Calu3 (cell line): ENCODE measurements at regions of chr2 and their contacts with region 1.

Region 1: DNA sequence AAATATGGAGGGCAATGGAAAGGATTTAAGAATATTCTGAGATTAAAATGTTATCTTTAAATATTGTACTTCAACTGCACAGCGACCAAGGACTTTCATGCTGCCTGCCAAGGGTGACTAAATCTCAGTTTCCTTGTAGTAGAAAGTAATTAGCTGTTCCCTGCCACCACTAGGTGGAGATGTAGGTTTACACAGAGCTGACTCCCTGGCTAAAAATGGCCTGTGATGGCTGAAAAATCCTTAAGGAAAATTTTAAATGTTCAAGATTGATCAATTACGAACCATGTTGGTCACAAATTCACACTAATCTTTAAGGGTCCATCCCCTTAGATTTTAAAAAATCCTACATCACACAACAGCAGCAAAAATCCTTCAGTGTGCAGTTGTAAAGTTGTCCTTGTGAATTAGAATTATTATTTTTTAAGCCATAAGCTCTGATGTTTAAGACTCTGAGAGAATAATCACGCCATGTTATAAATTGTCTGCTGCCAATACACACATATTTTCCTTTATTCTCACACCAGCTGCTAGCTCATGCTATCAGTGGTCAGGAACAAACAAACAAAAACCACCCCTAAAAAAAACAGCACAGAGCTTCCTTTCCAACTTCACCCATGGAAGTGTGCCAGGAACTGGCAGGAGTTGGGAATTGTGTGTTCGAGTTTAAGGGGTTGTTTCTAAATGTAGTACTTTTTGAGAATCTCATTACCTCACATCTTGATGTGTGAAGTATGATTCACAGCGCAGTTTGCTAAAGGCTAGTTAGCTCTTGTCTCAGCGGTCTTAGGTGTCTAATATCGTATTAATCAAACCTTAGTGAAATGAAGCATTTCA is 399.8 kb downstream of the TMEM182 start:
- DNase-seq: peak; percentile 52
- H3K4me3 Mint-ChIP-seq: no peak overlapping the region
- H3K27ac Mint-ChIP-seq: no peak overlapping the region
- H3K4me1 Mint-ChIP-seq: no peaks in the 10 kb centered on the region
- H3K27me3 Mint-ChIP-seq: no peaks in the 10 kb centered on the region
- CTCF ChIP-seq: peak; percentile 20

Region 2: DNA sequence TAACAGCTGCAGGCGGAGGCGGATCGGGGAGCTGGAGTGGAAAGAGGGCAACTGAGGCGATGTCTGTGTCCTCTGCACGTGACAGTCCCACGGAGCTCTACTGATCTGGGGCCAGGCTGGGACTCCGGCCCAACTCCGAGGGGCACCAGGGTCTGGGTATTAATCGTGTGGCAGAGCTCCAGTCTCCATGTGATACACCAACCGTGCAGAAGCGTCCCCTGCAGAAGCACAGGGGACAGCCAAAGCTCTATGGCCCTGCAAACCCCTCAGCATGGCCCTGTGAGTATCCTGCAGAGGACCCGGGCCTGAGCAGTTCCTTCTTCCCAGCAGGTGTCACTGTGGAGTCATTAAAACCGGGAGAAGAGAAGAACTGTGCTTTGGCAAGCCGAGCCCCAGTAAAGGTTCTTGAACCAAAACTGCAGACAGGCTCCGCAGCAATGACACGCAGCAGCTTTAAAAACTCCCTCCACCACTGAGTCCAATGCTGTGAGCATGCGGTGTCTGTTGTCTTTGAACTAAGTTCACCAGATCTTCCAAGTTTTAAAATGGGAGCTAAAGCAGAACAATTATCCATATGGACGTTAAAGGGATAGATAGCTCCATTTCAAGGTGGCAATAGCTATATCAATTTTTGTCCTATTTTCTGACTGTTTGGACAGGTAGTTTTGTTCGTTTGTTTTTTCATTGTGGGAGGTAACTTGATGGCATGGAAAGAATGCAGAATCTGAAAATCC is 320.4 kb before region 1 on chr2:
- CTCF ChIA-PET with region 1: interaction called, 3 read pairs
- intact Hi-C with region 1: loop called (anchors 10 kb)
- DNase-seq: peak; percentile 63
- H3K4me3 Mint-ChIP-seq: no peak overlapping the region
- H3K27ac Mint-ChIP-seq: no peak overlapping the region
- H3K4me1 Mint-ChIP-seq: no peaks in the 10 kb centered on the region
- H3K27me3 Mint-ChIP-seq: no peaks in the 10 kb centered on the region
- CTCF ChIP-seq: peak; percentile 30

Region 3: DNA sequence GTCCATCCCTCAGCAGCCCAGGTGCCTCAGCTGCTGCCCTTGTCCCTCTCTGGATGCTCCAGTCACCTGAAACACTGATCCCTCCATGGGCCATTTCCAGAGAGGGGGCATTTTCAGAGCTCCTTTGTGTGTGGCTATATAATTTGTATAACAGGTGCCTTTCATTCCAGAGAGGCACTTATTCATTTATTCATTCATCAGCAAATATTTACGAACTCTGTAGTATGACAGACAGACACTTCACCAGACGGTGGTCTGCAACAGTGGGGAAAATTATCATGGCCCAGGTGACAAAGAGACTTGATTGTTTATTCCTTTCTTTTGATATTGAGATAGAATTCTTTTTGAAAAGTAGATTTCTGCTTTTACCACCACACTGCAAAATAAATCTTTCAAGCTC is 38.2 kb before region 1 on chr2:
- CTCF ChIA-PET with region 1: no interaction called
- intact Hi-C with region 1: no loop called
- DNase-seq: no peak
- H3K4me3 Mint-ChIP-seq: no peak overlapping the region
- H3K27ac Mint-ChIP-seq: no peak overlapping the region
- H3K4me1 Mint-ChIP-seq: no peaks in the 10 kb centered on the region
- H3K27me3 Mint-ChIP-seq: no peaks in the 10 kb centered on the region
- CTCF ChIP-seq: no peak

Region 4: DNA sequence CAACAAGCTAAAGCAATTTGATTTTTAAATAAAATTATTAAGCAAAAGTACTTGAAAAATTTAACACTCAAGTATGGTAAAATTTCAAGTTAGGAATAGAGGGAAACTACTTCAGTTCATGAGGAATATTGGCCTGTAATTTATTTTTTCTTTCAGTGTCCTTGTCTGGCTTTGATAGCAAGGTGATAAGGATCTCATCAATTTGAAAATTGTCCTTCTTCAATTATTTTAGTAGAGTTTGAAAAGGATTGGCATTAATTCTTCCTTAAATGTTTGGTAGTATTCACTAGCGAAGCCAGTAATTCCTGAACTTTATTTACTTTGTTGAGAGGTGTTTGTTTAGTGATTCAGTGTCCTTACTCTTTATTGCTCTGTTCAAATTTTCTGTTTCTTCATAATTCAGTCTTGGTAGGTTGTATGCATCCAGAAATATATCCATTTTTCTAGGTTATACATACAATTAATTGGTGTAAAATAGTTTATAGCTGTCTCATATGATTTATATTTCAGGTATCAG is 1015.4 kb after region 1 on chr2:
- CTCF ChIA-PET with region 1: no interaction called
- intact Hi-C with region 1: no loop called
- DNase-seq: no peak
- H3K4me3 Mint-ChIP-seq: no peak overlapping the region
- H3K27ac Mint-ChIP-seq: no peak overlapping the region
- H3K4me1 Mint-ChIP-seq: no peaks in the 10 kb centered on the region
- H3K27me3 Mint-ChIP-seq: no peaks in the 10 kb centered on the region
- CTCF ChIP-seq: no peak

Region 5: GRCh38 chr2:104849618-104850141 is 1688.0 kb after region 1 on chr2:
- CTCF ChIA-PET with region 1: interaction called, 10 read pairs
- intact Hi-C with region 1: loop called (anchors 1 kb)
- DNase-seq: peak; percentile 75
- H3K4me3 Mint-ChIP-seq: no peak overlapping the region
- H3K27ac Mint-ChIP-seq: no peak overlapping the region
- H3K4me1 Mint-ChIP-seq: peaks cover 18% of the 10 kb centered on the region
- H3K27me3 Mint-ChIP-seq: peaks cover 100% of the 10 kb centered on the region
- CTCF ChIP-seq: peak; percentile 73

Region 6: GRCh38 chr2:104944495-104944894 is 1782.8 kb after region 1 on chr2:
- CTCF ChIA-PET with region 1: no interaction called
- intact Hi-C with region 1: loop called (anchors 1 kb)
- DNase-seq: peak; percentile 50
- H3K4me3 Mint-ChIP-seq: no peak overlapping the region
- H3K27ac Mint-ChIP-seq: no peak overlapping the region
- H3K4me1 Mint-ChIP-seq: peaks cover 10% of the 10 kb centered on the region
- H3K27me3 Mint-ChIP-seq: no peaks in the 10 kb centered on the region
- CTCF ChIP-seq: peak; percentile 38